OCI-LY7 (cell line): ENCODE measurements at regions of chrX and their contacts with region 1.

Region 1: GRCh38 chrX:15761564-15762191 is 23.6 kb downstream of the CA5B start:
- DNase-seq: peak; percentile 43
- H3K4me3 ChIP-seq: no peak overlapping the region
- H3K27ac ChIP-seq: no peak overlapping the region
- H3K4me1 ChIP-seq: no peaks in the 10 kb centered on the region
- CTCF ChIP-seq: peak; percentile 80

Region 2: GRCh38 chrX:15973299-15973698 is 211.6 kb after region 1 on chrX:
- CTCF ChIA-PET with region 1: no interaction called
- POLR2A ChIA-PET with region 1: interaction called, 3 read pairs
- intact Hi-C with region 1: loop called (anchors 5 kb)
- DNase-seq: peak; percentile 56
- H3K4me3 ChIP-seq: no peak overlapping the region
- H3K27ac ChIP-seq: no peak overlapping the region
- H3K4me1 ChIP-seq: no peaks in the 10 kb centered on the region
- CTCF ChIP-seq: peak; percentile 67

Region 3: DNA sequence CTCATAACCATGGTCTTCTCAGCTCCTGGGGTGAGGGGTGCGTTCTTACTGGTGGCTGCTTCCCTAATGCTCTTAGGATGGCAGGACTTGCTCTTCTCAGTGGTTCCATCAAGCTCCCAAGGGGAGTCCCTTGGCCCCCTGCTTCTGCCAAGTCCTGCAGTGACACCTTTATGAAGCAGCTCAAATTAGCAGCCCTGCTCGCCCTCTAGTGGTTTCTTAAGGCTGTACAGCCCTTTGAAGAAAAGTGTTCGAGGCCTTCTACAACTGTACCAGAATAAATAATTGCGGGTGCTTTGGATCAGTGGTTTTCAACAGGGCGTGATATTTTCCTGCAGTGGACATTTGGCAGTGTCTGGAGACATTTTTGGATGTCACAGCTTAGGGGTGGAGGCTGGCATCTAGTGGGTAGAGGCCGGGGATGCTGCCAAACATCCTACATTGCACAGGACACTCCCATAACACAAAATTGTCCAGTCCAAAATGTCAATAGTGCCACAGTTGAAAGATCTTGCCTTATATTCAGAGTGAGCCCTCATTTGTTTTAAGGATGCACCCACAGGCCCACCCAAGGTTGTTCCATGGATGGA is 683.6 kb after region 1 on chrX:
- CTCF ChIA-PET with region 1: no interaction called
- POLR2A ChIA-PET with region 1: no interaction called
- intact Hi-C with region 1: loop called (anchors 10 kb)
- DNase-seq: peak; percentile 48
- H3K4me3 ChIP-seq: no peak overlapping the region
- H3K27ac ChIP-seq: no peak overlapping the region
- H3K4me1 ChIP-seq: no peaks in the 10 kb centered on the region
- CTCF ChIP-seq: peak; percentile 80